ENCODE measurements at regions of chr15 and their contacts with region 1.

Region 1: DNA sequence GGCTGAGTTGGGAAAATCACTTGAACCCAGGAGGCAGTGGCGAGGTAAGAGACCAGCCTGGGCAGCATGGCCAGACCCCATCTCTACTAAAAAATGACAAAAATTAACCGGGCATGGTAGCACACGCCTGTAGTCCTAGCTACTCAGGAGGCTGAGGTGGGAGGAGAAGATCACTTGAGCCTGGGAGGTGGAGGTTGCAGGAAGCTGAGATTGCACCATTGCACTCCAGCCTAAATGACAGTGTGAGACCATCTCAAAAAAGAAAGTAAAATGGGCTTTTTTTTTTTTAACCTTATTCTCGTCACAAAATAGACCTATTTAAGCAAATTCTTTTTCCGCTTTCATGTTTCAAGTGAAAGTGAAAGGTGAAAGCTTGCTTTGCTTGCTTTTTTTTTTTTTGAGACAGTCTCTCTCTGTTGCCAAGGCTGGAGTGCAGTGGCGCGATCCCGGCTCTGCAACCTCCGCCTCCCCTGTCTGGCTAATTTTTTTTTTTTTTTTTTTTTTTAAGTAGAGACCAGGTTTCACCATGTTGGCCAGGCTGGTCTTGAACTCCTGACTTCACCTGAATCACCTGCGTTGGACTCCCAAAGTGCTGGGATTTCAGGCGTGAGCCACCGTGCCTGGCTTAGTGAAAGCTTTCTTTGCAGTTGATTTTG is 3.6 kb downstream of the PDIA3 start:
- DNase-seq: peak; percentile 75 to 86 (median 82)
- H3K4me3 ChIP-seq: peak overlapping the region in 1 of 2 donors; percentile 49
- H3K4me3 Mint-ChIP-seq: peak overlapping the region; percentile 69 to 87 (median 82)
- H3K27ac ChIP-seq: peak overlapping the region; percentile 59
- H3K27ac Mint-ChIP-seq: peak overlapping the region; percentile 91 to 96 (median 94)
- H3K4me1 ChIP-seq: peaks cover 66% of the 10 kb centered on the region
- H3K4me1 Mint-ChIP-seq: peaks cover 27 to 70% (median 47%) of the 10 kb centered on the region in 4 donors
- H3K27me3 ChIP-seq: no peaks in the 10 kb centered on the region
- H3K27me3 Mint-ChIP-seq: no peaks in the 10 kb centered on the region

Region 2: DNA sequence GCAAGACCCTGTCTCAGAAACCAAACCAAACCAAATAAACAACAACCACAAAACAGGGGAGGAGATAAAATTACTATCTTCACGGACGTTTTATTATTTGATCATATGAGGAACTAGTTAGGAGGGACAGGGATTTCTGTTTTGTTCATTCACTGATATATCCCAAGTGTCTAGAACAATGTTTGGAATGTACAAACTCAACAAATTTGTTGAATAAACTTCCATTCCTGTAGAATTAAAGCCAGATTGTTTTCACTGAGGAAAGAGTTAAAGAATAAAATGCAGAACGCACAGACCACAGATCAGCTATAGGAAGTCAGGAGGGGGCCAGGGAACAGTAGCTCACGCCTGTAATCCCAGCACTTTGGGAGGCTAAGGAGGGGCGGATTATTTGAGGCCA is 124.7 kb before region 1 on chr15:
- CTCF ChIA-PET with region 1: no interaction called
- POLR2A ChIA-PET with region 1: no interaction called
- intact Hi-C with region 1: no loop called
- DNase-seq: no peak
- H3K4me3 ChIP-seq: no peak overlapping the region
- H3K4me3 Mint-ChIP-seq: no peak overlapping the region
- H3K27ac ChIP-seq: no peak overlapping the region
- H3K27ac Mint-ChIP-seq: peak overlapping the region in 1 of 7 donors; percentile 50
- H3K4me1 ChIP-seq: no peaks in the 10 kb centered on the region
- H3K4me1 Mint-ChIP-seq: peaks cover 0 to 2% (median 0%) of the 10 kb centered on the region in 4 donors
- H3K27me3 ChIP-seq: no peaks in the 10 kb centered on the region
- H3K27me3 Mint-ChIP-seq: peaks cover 6 to 7% of the 10 kb centered on the region in 2 donors

Region 3: GRCh38 chr15:43769584-43770228 is 19.9 kb after region 1 on chr15:
- CTCF ChIA-PET with region 1: interaction called, 5 read pairs
- POLR2A ChIA-PET with region 1: interaction called, 22 read pairs
- intact Hi-C with region 1: loop called (anchors 2 kb)
- DNase-seq: peak; percentile 50 to 59 (median 55)
- H3K4me3 ChIP-seq: no peak overlapping the region
- H3K4me3 Mint-ChIP-seq: no peak overlapping the region
- H3K27ac ChIP-seq: no peak overlapping the region
- H3K27ac Mint-ChIP-seq: peak overlapping the region in 6 of 7 donors; percentile 6 to 79 (median 60)
- H3K4me1 ChIP-seq: no peaks in the 10 kb centered on the region
- H3K4me1 Mint-ChIP-seq: peaks cover 0 to 7% (median 2%) of the 10 kb centered on the region in 4 donors
- H3K27me3 ChIP-seq: no peaks in the 10 kb centered on the region
- H3K27me3 Mint-ChIP-seq: no peaks in the 10 kb centered on the region

Region 4: GRCh38 chr15:43776718-43777583 is 27.1 kb after region 1 on chr15 and contains the start of gene ELL3:
- CTCF ChIA-PET with region 1: interaction called, 26 read pairs
- POLR2A ChIA-PET with region 1: interaction called, 22 read pairs
- intact Hi-C with region 1: loop called (anchors 2 kb)
- DNase-seq: peak; percentile 85 to 91 (median 86)
- H3K4me3 ChIP-seq: peak within 1 kb of the TSS; percentile 82 to 95
- H3K4me3 Mint-ChIP-seq: peak within 1 kb of the TSS; percentile 93 to 96 (median 94)
- H3K27ac ChIP-seq: peak within 1 kb of the TSS; percentile 66
- H3K27ac Mint-ChIP-seq: peak within 1 kb of the TSS; percentile 94 to 97 (median 95)
- H3K4me1 ChIP-seq: peaks cover 16% of the 10 kb centered on the region
- H3K4me1 Mint-ChIP-seq: peaks cover 8 to 18% (median 11%) of the 10 kb centered on the region in 4 donors
- H3K27me3 ChIP-seq: no peaks in the 10 kb centered on the region
- H3K27me3 Mint-ChIP-seq: no peaks in the 10 kb centered on the region
- total RNA-seq, gene ELL3: 1.3 to 1.8 TPM

Region 5: GRCh38 chr15:43791993-43792760 is 42.4 kb after region 1 on chr15 and contains the start of gene SERF2:
- CTCF ChIA-PET with region 1: interaction called, 3 read pairs
- POLR2A ChIA-PET with region 1: interaction called, 9 read pairs
- intact Hi-C with region 1: loop called (anchors 1 kb)
- DNase-seq: peak; percentile 97 to 100 (median 98)
- H3K4me3 ChIP-seq: peak within 1 kb of the TSS; percentile 97
- H3K4me3 Mint-ChIP-seq: peak within 1 kb of the TSS; percentile 93 to 97 (median 96)
- H3K27ac ChIP-seq: peak within 1 kb of the TSS; percentile 100
- H3K27ac Mint-ChIP-seq: peak within 1 kb of the TSS; percentile 97 to 99 (median 98)
- H3K4me1 ChIP-seq: peaks cover 36% of the 10 kb centered on the region
- H3K4me1 Mint-ChIP-seq: peaks cover 20 to 56% (median 37%) of the 10 kb centered on the region in 4 donors
- H3K27me3 ChIP-seq: no peaks in the 10 kb centered on the region
- H3K27me3 Mint-ChIP-seq: no peaks in the 10 kb centered on the region
- total RNA-seq, gene SERF2: 564 to 596 TPM

Region 6: DNA sequence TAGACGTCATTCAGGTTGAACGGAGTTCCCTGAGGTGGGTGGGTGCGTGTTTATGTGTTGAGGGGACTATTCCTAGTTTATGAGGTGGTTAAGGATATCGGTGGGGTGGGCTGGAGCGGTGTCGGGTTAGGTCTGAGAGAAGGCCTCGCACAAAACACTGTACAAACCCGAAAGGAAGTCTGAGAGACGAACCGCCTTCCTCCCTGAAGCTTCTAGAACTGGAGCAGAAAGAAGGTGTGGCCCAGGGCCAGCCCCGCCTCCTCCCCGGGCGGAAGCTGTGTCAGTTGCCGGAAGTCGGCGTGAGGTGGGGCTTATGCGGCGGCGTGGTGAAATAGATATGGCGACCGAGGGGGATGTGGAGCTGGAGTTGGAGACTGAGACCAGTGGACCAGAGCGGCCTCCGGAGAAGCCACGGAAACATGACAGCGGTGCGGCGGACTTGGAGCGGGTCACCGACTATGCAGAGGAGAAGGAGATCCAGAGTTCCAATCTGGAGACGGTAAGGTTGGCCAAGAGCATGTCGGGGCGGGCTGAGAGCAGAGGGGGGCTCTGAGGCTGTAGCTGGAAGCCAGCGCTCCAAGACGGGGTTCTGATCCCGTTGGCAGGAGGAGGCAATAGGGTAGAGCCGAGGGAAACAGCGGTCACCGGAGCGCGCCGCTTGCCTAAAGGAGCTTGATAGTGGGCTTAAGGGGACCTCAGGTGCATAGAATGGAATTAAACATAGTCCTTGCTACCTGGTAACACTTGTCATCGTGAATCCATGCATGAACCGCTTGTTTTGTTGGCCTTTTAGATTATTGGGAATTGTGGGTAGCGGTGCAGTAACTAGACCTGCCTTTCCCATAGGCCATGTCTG is 50.7 kb after region 1 on chr15 and contains the start of gene HYPK:
- CTCF ChIA-PET with region 1: no interaction called
- POLR2A ChIA-PET with region 1: interaction called, 10 read pairs
- intact Hi-C with region 1: no loop called
- DNase-seq: peak; percentile 90 to 94 (median 91)
- H3K4me3 ChIP-seq: peak within 1 kb of the TSS; percentile 96 to 97
- H3K4me3 Mint-ChIP-seq: peak within 1 kb of the TSS; percentile 98 to 100 (median 100)
- H3K27ac ChIP-seq: peak within 1 kb of the TSS; percentile 76
- H3K27ac Mint-ChIP-seq: peak within 1 kb of the TSS; percentile 92 to 100 (median 99)
- H3K4me1 ChIP-seq: peaks cover 32% of the 10 kb centered on the region
- H3K4me1 Mint-ChIP-seq: peaks cover 16 to 55% (median 39%) of the 10 kb centered on the region in 4 donors
- H3K27me3 ChIP-seq: no peaks in the 10 kb centered on the region
- H3K27me3 Mint-ChIP-seq: no peaks in the 10 kb centered on the region
- total RNA-seq, gene HYPK: 23.6 to 24.6 TPM

Region 7: GRCh38 chr15:44045217-44045616 is 295.4 kb after region 1 on chr15:
- CTCF ChIA-PET with region 1: no interaction called
- POLR2A ChIA-PET with region 1: no interaction called
- intact Hi-C with region 1: no loop called
- DNase-seq: no peak
- H3K4me3 ChIP-seq: no peak overlapping the region
- H3K4me3 Mint-ChIP-seq: no peak overlapping the region
- H3K27ac ChIP-seq: no peak overlapping the region
- H3K27ac Mint-ChIP-seq: no peak overlapping the region
- H3K4me1 ChIP-seq: no peaks in the 10 kb centered on the region
- H3K4me1 Mint-ChIP-seq: no peaks in the 10 kb centered on the region
- H3K27me3 ChIP-seq: no peaks in the 10 kb centered on the region
- H3K27me3 Mint-ChIP-seq: peaks cover 12 to 16% of the 10 kb centered on the region in 2 donors

Measured in CD4-positive, alpha-beta memory T cell (primary cell).